Activated CD4-positive, alpha-beta T cell treated with anti-CD3 and anti-CD28 coated beads, Interleukin-2, amount 10 ng/mL, durations not matched to agents 24 days and 14 days (primary cell): ENCODE measurements at regions of chrX and their contacts with region 1.

Region 1: GRCh38 chrX:136711147-136711546 is 63.2 kb downstream of the CD40LG start:
- DNase-seq: peak; percentile 69
- H3K4me3 Mint-ChIP-seq: peak overlapping the region; percentile 6
- H3K27ac Mint-ChIP-seq: peak overlapping the region; percentile 86
- H3K4me1 Mint-ChIP-seq: peaks cover 31% of the 10 kb centered on the region
- H3K27me3 Mint-ChIP-seq: no peaks in the 10 kb centered on the region

Region 2: DNA sequence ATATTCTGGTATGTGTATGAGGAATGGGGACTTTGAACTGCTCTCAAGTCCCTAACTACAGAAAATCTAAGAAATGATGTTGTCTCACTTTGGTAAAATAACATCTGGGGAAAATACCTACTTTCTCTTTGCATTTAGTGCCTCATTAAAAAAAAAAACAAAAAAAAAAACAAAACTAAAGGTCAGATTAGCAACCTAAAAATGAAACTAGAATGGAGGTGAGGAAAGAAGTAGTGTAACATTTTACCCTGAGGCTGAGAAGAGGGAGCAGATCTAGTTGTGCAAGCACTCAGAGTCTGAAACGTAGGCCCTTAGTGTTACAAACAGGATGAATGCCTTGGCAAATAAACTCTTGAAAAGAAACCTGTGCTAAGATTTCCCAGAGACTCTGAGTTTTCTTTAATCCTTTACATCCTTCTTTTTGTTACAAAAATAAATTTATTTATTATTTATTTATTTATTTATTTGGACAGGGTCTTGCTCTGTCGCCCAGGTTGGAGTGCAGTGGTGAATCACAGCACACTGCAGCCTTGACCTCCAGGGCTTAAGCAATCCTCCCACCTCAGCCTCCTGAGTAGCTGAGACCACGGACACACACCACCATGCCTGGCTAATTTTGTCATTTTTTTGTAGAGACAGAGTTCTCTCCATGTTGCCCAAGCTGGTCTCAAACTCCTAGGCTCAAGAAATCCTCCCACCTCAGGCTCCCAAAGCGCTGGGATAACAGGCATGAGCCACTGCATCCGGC is 122.9 kb before region 1 on chrX:
- intact Hi-C with region 1: loop called (anchors 1 kb)
- DNase-seq: peak; percentile 63
- H3K4me3 Mint-ChIP-seq: peak overlapping the region; percentile 62
- H3K27ac Mint-ChIP-seq: peak overlapping the region; percentile 87
- H3K4me1 Mint-ChIP-seq: peaks cover 49% of the 10 kb centered on the region
- H3K27me3 Mint-ChIP-seq: no peaks in the 10 kb centered on the region

Region 3: GRCh38 chrX:136747003-136747986 is 36.1 kb after region 1 on chrX:
- intact Hi-C with region 1: loop called (anchors 5 kb)
- DNase-seq: no peak
- H3K4me3 Mint-ChIP-seq: peak overlapping the region; percentile 69
- H3K27ac Mint-ChIP-seq: peak overlapping the region; percentile 90
- H3K4me1 Mint-ChIP-seq: peaks cover 71% of the 10 kb centered on the region
- H3K27me3 Mint-ChIP-seq: no peaks in the 10 kb centered on the region

Region 4: DNA sequence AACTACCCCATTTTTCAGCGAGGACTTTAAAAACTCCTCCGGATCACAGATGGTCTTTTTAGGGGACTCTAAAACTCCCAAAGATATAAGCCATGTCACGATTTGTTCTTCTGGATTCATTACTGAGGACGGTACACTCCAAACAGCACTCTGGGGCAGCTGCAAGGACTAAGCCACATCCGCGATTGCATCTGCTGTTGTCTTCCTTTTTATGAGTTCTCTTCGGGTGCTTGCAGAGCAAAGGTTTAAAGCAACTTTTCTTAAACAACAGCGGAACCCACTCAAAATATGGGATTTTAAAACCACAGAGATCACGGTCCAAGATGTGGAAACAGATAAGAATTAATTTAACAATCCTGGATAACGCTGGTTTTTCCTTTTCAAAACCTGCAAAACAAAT is 69.6 kb after region 1 on chrX and contains the start of gene ARHGEF6:
- intact Hi-C with region 1: loop called (anchors 2 kb)
- DNase-seq: peak; percentile 81
- H3K4me3 Mint-ChIP-seq: peak within 1 kb of the TSS; percentile 86
- H3K27ac Mint-ChIP-seq: peak within 1 kb of the TSS; percentile 94
- H3K4me1 Mint-ChIP-seq: peaks cover 53% of the 10 kb centered on the region
- H3K27me3 Mint-ChIP-seq: no peaks in the 10 kb centered on the region
- total RNA-seq, gene ARHGEF6: 37.4 and 38.0 TPM in 2 replicates

Region 5: DNA sequence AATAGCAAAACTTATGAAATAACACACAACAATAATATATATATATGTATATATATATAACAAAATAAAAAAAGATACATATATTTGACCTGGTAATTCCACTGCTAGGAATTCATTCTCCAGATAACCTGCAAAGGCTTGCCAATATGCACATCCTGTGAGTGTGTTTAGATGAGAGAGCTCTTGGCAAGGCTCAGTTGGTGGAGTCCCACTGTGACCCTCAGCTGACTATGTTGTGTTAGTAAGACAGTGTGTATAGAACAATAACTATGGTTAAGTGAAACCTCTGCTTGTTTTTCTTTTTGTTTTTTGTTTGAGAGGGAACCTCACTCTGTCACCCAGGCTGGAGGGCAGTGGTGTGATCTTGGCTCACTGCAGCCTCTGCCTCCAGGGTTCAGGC is 208.9 kb after region 1 on chrX:
- intact Hi-C with region 1: loop called (anchors 1 kb)
- DNase-seq: no peak
- H3K4me3 Mint-ChIP-seq: no peak overlapping the region
- H3K27ac Mint-ChIP-seq: no peak overlapping the region
- H3K4me1 Mint-ChIP-seq: peaks cover 1% of the 10 kb centered on the region
- H3K27me3 Mint-ChIP-seq: no peaks in the 10 kb centered on the region